Body of pancreas (tissue), 4 donors: ENCODE measurements at regions of chr11 and their contacts with region 1.

Region 1: GRCh38 chr11:77183431-77183984 is 55.5 kb downstream of the MYO7A start:
- DNase-seq: no peak
- ATAC-seq: no peak
- H3K4me3 ChIP-seq: no peak overlapping the region
- H3K27ac ChIP-seq: no peak overlapping the region
- H3K4me1 ChIP-seq: no peaks in the 10 kb centered on the region
- H3K27me3 ChIP-seq: no peaks in the 10 kb centered on the region
- CTCF ChIP-seq: no peak
- POLR2A ChIP-seq: no peak

Region 2: GRCh38 chr11:77121096-77121640 is 62.3 kb before region 1 on chr11:
- intact Hi-C with region 1: loop called (anchors 5 kb)
- DNase-seq: no peak
- ATAC-seq: no peak
- H3K4me3 ChIP-seq: no peak overlapping the region
- H3K27ac ChIP-seq: no peak overlapping the region
- H3K4me1 ChIP-seq: no peaks in the 10 kb centered on the region
- H3K27me3 ChIP-seq: no peaks in the 10 kb centered on the region
- CTCF ChIP-seq: no peak
- POLR2A ChIP-seq: no peak

Region 3: DNA sequence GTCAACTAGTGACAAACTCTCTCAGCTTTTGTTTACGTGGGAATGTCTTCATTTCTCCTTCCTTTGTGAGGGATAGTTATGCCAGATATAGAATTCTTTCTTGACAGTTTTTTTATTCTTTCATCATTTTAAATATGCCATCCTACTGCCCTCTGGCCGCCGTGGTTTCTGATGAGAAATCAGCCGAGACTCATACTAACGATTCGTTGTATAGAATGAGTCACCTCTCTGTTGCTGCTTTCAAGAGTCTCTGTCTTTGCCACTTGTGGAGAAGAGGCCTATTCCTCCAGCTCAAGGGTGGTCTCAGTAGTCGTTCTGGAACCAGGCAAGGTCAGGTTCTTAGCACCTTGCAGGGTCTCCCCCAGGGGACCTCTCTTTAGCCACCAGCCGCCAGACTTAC is 47.4 kb before region 1 on chr11:
- intact Hi-C with region 1: no loop called
- DNase-seq: no peak
- ATAC-seq: no peak
- H3K4me3 ChIP-seq: no peak overlapping the region
- H3K27ac ChIP-seq: no peak overlapping the region
- H3K4me1 ChIP-seq: peaks cover 20% of the 10 kb centered on the region
- H3K27me3 ChIP-seq: no peaks in the 10 kb centered on the region
- CTCF ChIP-seq: no peak
- POLR2A ChIP-seq: no peak

Region 4: DNA sequence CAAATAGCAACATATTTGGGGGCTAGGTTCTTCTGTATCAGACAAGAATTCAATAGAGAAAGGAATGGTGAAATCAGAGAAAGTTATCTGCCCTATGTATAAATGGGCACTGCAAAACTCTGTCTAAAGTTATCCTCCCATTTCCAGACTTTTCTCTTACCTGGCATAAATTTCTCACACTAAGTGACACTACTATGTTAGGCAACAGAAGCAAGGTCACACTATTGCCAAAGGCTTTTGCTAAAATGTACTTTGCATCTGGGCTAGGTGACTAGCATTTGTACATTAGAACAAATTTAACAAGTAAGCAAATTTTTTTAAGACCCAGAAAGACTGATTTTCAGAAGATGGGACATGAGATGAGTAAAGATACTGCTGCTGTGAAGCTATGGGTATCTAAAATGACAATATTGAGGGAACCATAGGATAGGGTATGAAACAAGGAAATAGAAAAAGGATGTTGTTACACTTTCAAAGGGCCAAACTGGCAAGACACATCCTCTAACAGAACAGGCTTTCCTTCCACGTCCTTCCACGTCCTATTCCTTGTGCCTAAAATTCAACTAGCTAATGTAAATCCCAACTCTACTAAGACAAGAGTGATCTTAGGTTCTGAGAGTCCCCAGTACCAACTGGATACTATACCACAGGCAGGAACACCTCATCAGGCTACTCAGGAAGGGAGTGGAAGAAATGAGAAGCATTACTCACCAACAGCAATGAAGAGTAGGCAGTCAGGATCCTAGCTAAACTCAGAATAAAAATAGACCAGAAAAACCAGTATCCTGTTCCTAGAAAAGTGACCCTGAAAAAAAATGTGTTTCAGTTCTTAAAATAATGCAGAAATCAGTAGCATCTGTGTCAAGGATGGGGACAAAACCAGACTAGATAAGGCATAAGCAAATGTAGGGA is 95.3 kb after region 1 on chr11:
- intact Hi-C with region 1: no loop called
- DNase-seq: no peak
- ATAC-seq: no peak
- H3K4me3 ChIP-seq: no peak overlapping the region
- H3K27ac ChIP-seq: no peak overlapping the region
- H3K4me1 ChIP-seq: no peaks in the 10 kb centered on the region
- H3K27me3 ChIP-seq: no peaks in the 10 kb centered on the region
- CTCF ChIP-seq: no peak
- POLR2A ChIP-seq: no peak